ENCODE measurements at regions of chr2 and their contacts with region 1.

Region 1: DNA sequence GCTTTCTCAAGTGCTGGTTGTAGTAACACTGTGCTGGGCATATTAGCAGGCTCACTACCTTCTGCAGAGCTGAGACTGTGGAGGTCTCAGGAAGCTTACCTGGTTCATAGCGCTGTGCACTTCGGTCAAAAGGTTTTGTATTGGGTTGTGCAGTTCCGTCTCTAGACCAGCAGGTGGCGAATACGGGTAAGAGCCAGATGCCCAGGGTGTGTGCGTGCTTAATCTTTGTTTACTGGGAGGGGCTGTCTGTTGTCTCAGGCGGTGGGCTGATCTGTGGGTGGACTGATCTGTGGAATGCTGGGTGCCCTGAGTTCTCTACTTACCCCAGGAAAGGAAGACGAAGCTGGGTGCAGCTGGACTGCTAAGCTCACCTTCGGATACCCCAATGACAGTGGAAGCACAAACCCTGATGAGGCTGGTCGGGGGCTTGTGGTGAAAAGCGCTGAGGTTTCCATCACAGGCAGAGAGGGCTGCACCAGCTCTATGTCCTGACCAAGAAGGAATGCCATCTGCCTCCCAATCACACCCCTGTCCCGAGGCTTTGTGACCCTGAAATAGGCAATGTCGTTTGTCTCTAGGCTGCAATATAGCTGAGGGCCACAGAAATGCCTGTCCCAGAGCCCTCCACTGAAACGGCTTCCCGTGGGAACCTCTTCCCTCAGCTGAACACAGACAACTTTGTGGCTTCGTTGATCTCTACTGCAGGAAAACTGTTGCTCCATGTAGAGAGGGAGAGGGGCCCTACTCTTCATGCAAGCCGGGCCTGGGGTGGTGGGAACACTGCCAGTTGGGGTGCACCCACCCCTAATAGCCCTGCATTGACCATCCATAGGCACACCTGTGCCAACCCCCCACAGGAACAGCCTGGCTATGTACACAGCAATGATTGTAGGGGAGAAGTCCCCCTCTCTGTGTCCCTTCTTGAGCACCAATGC is 45.9 kb upstream of the FAM117B start:
- DNase-seq: peak; percentile 45
- ATAC-seq: peak; percentile 99
- H3K4me3 Mint-ChIP-seq: peak overlapping the region; percentile 51
- H3K27ac Mint-ChIP-seq: peak overlapping the region; percentile 54
- H3K4me1 Mint-ChIP-seq: peaks cover 19% of the 10 kb centered on the region
- H3K27me3 Mint-ChIP-seq: no peaks in the 10 kb centered on the region
- CTCF ChIP-seq: no peak

Region 2: DNA sequence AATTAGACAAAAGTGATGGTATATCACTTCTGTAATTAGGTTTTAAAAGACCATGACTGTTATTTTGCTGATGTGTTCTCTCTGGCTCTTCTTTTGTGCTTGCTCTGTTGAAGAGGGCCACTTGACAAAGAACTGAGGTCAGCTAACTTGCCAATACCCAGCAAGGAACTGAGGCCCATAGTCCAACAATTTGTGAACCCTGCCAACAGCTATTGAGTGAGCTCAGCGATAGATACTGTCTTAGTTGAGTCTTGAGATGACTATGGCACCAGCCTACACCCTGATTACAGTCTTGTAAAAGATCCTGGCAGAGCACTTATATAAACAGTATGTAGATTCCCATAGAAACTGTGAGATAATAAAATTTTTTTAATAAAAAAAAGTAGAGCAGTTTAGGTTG is 109.8 kb before region 1 on chr2:
- CTCF ChIA-PET with region 1: no interaction called
- POLR2A ChIA-PET with region 1: no interaction called
- intact Hi-C with region 1: no loop called
- DNase-seq: no peak
- ATAC-seq: no peak
- H3K4me3 Mint-ChIP-seq: no peak overlapping the region
- H3K27ac Mint-ChIP-seq: no peak overlapping the region
- H3K4me1 Mint-ChIP-seq: no peaks in the 10 kb centered on the region
- H3K27me3 Mint-ChIP-seq: no peaks in the 10 kb centered on the region
- CTCF ChIP-seq: no peak

Region 3: GRCh38 chr2:202555356-202555755 is 33.6 kb before region 1 on chr2:
- CTCF ChIA-PET with region 1: no interaction called
- POLR2A ChIA-PET with region 1: no interaction called
- intact Hi-C with region 1: no loop called
- DNase-seq: no peak
- ATAC-seq: no peak
- H3K4me3 Mint-ChIP-seq: no peak overlapping the region
- H3K27ac Mint-ChIP-seq: no peak overlapping the region
- H3K4me1 Mint-ChIP-seq: no peaks in the 10 kb centered on the region
- H3K27me3 Mint-ChIP-seq: no peaks in the 10 kb centered on the region
- CTCF ChIP-seq: no peak

Region 4: DNA sequence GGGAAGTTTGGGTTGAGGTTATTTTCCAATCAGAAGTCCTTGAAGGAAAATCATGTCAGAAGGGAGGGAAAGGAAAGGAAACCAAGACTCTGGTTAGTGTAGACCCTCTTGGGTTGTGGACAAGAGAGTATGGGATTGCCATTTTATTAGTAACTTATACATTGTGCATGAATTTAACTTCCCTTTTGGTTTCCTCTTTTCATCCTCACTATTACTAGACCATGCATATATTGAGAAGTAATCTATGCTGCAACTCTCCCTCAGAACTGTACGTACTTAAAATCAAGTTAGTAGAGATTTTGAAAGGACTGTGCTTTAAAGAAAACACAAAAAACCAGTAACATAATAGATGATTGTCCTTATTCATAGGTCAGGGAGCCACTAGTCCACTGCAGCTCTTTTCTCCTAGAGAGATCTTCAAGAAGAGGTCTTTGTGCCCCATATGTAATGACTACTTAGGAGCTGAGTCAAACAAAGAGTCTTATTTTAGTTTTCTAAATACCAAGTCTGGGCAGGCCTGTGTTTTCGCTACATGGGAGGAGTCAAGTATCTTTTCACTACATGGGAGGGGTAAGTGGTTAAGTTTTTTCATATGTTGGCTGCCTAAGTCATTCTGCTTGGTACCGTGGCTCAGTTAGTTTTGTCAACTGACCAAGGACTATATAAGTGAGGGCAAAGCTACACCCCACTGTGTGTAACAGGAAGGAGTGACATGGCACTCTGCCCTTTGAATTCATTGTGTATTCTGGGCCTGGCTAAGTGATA is 20.6 kb after region 1 on chr2:
- CTCF ChIA-PET with region 1: interaction called, 17 read pairs
- POLR2A ChIA-PET with region 1: interaction called, 5 read pairs
- intact Hi-C with region 1: loop called (anchors 1 kb)
- DNase-seq: no peak
- ATAC-seq: peak; percentile 81
- H3K4me3 Mint-ChIP-seq: peak overlapping the region; percentile 70
- H3K27ac Mint-ChIP-seq: peak overlapping the region; percentile 99
- H3K4me1 Mint-ChIP-seq: peaks cover 39% of the 10 kb centered on the region
- H3K27me3 Mint-ChIP-seq: no peaks in the 10 kb centered on the region
- CTCF ChIP-seq: no peak

Region 5: GRCh38 chr2:202695166-202695565 is 106.3 kb after region 1 on chr2:
- CTCF ChIA-PET with region 1: interaction called, 31 read pairs
- POLR2A ChIA-PET with region 1: no interaction called
- intact Hi-C with region 1: loop called (anchors 1 kb)
- DNase-seq: no peak
- ATAC-seq: no peak
- H3K4me3 Mint-ChIP-seq: no peak overlapping the region
- H3K27ac Mint-ChIP-seq: no peak overlapping the region
- H3K4me1 Mint-ChIP-seq: peaks cover 43% of the 10 kb centered on the region
- H3K27me3 Mint-ChIP-seq: no peaks in the 10 kb centered on the region
- CTCF ChIP-seq: no peak

Region 6: GRCh38 chr2:202718614-202719013 is 129.7 kb after region 1 on chr2:
- CTCF ChIA-PET with region 1: interaction called, 12 read pairs
- POLR2A ChIA-PET with region 1: no interaction called
- intact Hi-C with region 1: loop called (anchors 2 kb)
- DNase-seq: no peak
- ATAC-seq: no peak
- H3K4me3 Mint-ChIP-seq: no peak overlapping the region
- H3K27ac Mint-ChIP-seq: peak overlapping the region; percentile 61
- H3K4me1 Mint-ChIP-seq: peaks cover 38% of the 10 kb centered on the region
- H3K27me3 Mint-ChIP-seq: no peaks in the 10 kb centered on the region
- CTCF ChIP-seq: no peak

Region 7: GRCh38 chr2:202870431-202871299 is 281.8 kb after region 1 on chr2:
- CTCF ChIA-PET with region 1: interaction called, 52 read pairs
- POLR2A ChIA-PET with region 1: interaction called, 21 read pairs
- intact Hi-C with region 1: loop called (anchors 1 kb)
- DNase-seq: peak; percentile 53
- ATAC-seq: peak; percentile 81
- H3K4me3 Mint-ChIP-seq: peak overlapping the region; percentile 92
- H3K27ac Mint-ChIP-seq: peak overlapping the region; percentile 81
- H3K4me1 Mint-ChIP-seq: peaks cover 5% of the 10 kb centered on the region
- H3K27me3 Mint-ChIP-seq: no peaks in the 10 kb centered on the region
- CTCF ChIP-seq: peak; percentile 12